Tibial artery (tissue), 4 donors: ENCODE measurements at regions of chr18 and their contacts with region 1.

Region 1: DNA sequence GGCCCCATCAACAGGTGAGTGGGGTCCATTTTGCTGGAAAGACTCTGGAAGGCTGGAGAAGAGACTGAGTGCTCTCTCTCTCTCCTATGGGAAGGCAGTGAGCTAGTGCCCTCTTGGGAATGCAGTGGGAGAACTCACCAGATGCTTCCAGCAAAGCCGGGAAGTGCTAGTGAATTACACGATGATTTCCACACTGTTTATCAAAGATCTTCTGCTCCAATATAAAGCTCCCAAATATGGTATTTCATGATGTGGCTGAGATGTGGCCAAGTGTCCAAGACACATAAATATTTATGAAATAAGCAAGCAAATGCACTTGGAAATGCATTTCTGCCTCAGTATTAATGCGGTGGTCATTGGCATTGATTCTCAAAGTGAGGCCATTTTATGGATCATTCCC is 135.9 kb downstream of the VAPA start:
- DNase-seq: peak in 1 of 2 donors; percentile 60
- H3K4me3 ChIP-seq: no peak overlapping the region
- H3K27ac ChIP-seq: no peak overlapping the region
- H3K4me1 ChIP-seq: peaks cover 0 to 5% (median 2%) of the 10 kb centered on the region in 4 donors
- H3K27me3 ChIP-seq: no peaks in the 10 kb centered on the region
- CTCF ChIP-seq: no peak

Region 2: GRCh38 chr18:10002280-10002679 is 47.5 kb before region 1 on chr18:
- intact Hi-C with region 1: no loop called
- DNase-seq: no peak
- H3K4me3 ChIP-seq: no peak overlapping the region
- H3K27ac ChIP-seq: no peak overlapping the region
- H3K4me1 ChIP-seq: peaks cover 0 to 6% (median 2%) of the 10 kb centered on the region in 4 donors
- H3K27me3 ChIP-seq: no peaks in the 10 kb centered on the region
- CTCF ChIP-seq: no peak

Region 3: GRCh38 chr18:10094655-10095054 is 44.9 kb after region 1 on chr18:
- intact Hi-C with region 1: loop called (anchors 1 kb)
- DNase-seq: no peak
- H3K4me3 ChIP-seq: no peak overlapping the region
- H3K27ac ChIP-seq: no peak overlapping the region
- H3K4me1 ChIP-seq: no peaks in the 10 kb centered on the region
- H3K27me3 ChIP-seq: no peaks in the 10 kb centered on the region
- CTCF ChIP-seq: no peak